ENCODE measurements at regions of chr16 and their contacts with region 1.

Region 1: DNA sequence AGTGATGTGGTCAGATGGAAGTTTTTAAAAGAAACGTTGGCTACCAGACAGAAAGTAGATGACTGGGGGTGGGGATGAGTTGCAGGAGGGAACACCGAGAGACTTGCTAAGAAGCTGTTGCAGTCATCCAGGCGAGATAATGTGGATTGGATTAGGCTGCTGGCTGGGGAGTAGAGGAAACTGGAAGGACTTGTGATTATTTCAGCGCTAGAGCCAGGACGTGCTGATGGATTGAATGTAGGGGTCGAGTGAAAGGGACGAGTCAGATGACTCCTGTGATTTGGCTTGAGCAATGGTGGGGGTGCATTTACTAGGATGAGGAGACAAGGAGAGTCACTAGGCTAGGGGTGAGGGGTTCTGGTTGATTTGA is 88.5 kb downstream of the CLEC16A start:
- DNase-seq: no peak
- ATAC-seq: no peak
- H3K4me3 ChIP-seq: no peak overlapping the region
- H3K4me3 Mint-ChIP-seq: no peak overlapping the region
- H3K27ac ChIP-seq: no peak overlapping the region
- H3K27ac Mint-ChIP-seq: peak overlapping the region in 3 of 9 donors; percentile 43 to 63 (median 47)
- H3K4me1 ChIP-seq: no peaks in the 10 kb centered on the region
- H3K4me1 Mint-ChIP-seq: peaks cover 0 to 29% (median 0%) of the 10 kb centered on the region in 7 donors
- H3K27me3 ChIP-seq: no peaks in the 10 kb centered on the region
- H3K27me3 Mint-ChIP-seq: no peaks in the 10 kb centered on the region

Region 2: GRCh38 chr16:11045846-11046245 is 12.9 kb after region 1 on chr16:
- CTCF ChIA-PET with region 1: no interaction called
- POLR2A ChIA-PET with region 1: no interaction called
- intact Hi-C with region 1: loop called in 1 of 2 experiments (anchors 1 kb)
- DNase-seq: no peak
- ATAC-seq: no peak
- H3K4me3 ChIP-seq: no peak overlapping the region
- H3K4me3 Mint-ChIP-seq: no peak overlapping the region
- H3K27ac ChIP-seq: no peak overlapping the region
- H3K27ac Mint-ChIP-seq: peak overlapping the region in 1 of 9 donors; percentile 23
- H3K4me1 ChIP-seq: peaks cover 4 to 5% of the 10 kb centered on the region in 2 donors
- H3K4me1 Mint-ChIP-seq: peaks cover 1 to 55% (median 10%) of the 10 kb centered on the region in 7 donors
- H3K27me3 ChIP-seq: no peaks in the 10 kb centered on the region
- H3K27me3 Mint-ChIP-seq: no peaks in the 10 kb centered on the region

Measured in naive thymus-derived CD4-positive, alpha-beta T cell (primary cell).